ENCODE measurements at regions of chr12 and their contacts with region 1.

Region 1: DNA sequence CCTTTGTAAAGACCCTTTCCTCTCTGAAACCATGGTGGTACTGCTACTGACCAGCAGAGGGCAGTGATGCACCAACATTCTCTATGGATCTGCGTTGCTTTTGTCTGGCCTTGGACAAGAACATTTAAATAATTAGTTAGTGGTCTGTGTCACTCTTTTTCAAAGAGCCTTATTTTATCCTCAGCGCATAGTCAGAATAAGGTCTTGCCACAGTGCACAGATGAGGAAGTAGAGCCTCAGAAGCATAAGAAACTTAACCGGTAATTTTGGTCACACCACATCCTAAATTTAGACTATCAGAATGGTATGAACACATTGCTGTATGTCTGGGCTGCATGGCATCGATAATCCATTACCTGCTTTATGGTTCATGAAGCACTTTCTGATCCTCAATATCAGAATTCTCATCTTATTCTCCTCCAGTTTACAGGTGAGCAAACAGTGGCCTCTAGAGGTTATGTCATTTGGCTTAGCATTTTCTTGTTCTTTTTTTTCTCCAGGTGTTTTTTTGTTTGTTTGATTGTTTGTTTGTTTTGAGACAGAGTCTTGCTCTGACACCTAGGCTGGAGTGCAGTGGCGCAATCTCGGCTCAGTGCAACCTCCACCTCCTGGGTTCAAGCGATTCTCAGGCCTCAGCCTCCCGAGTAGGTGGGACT is 23.7 kb upstream of the IFT81 start:
- DNase-seq: peak in 8 of 9 donors; percentile 33 to 60 (median 55)
- ATAC-seq: peak; percentile 92
- H3K4me3 ChIP-seq: no peak overlapping the region
- H3K4me3 Mint-ChIP-seq: peak overlapping the region in 2 of 10 donors; percentile 12 to 44
- H3K27ac ChIP-seq: no peak overlapping the region
- H3K27ac Mint-ChIP-seq: peak overlapping the region in 4 of 9 donors; percentile 3 to 69 (median 42)
- H3K4me1 ChIP-seq: peaks cover 3 to 4% of the 10 kb centered on the region in 2 donors
- H3K4me1 Mint-ChIP-seq: peaks cover 0 to 13% (median 8%) of the 10 kb centered on the region in 7 donors
- H3K27me3 ChIP-seq: no peaks in the 10 kb centered on the region
- H3K27me3 Mint-ChIP-seq: no peaks in the 10 kb centered on the region

Region 2: DNA sequence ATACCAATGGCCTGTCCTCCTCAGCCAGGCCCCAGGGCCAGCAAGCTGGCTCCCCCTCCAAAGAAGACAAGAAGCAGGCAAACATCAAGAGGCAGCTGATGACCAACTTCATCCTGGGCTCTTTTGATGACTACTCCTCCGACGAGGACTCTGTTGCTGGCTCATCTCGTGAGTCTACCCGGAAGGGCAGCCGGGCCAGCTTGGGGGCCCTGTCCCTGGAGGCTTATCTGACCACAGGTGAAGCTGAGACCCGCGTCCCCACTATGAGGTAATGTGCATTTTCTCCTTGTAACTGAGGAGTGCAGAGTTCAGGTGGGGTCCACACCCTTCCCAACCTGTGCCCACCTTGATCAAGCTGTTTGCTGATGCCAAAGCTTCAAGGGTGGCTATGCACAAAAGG is 960.7 kb before region 1 on chr12:
- CTCF ChIA-PET with region 1: no interaction called
- POLR2A ChIA-PET with region 1: no interaction called
- intact Hi-C with region 1: no loop called
- DNase-seq: no peak
- ATAC-seq: no peak
- H3K4me3 ChIP-seq: no peak overlapping the region
- H3K4me3 Mint-ChIP-seq: no peak overlapping the region
- H3K27ac ChIP-seq: no peak overlapping the region
- H3K27ac Mint-ChIP-seq: no peak overlapping the region
- H3K4me1 ChIP-seq: no peaks in the 10 kb centered on the region
- H3K4me1 Mint-ChIP-seq: peaks cover 0 to 7% (median 4%) of the 10 kb centered on the region in 7 donors
- H3K27me3 ChIP-seq: no peaks in the 10 kb centered on the region
- H3K27me3 Mint-ChIP-seq: peaks cover 0 to 7% (median 4%) of the 10 kb centered on the region in 5 donors

Region 3: DNA sequence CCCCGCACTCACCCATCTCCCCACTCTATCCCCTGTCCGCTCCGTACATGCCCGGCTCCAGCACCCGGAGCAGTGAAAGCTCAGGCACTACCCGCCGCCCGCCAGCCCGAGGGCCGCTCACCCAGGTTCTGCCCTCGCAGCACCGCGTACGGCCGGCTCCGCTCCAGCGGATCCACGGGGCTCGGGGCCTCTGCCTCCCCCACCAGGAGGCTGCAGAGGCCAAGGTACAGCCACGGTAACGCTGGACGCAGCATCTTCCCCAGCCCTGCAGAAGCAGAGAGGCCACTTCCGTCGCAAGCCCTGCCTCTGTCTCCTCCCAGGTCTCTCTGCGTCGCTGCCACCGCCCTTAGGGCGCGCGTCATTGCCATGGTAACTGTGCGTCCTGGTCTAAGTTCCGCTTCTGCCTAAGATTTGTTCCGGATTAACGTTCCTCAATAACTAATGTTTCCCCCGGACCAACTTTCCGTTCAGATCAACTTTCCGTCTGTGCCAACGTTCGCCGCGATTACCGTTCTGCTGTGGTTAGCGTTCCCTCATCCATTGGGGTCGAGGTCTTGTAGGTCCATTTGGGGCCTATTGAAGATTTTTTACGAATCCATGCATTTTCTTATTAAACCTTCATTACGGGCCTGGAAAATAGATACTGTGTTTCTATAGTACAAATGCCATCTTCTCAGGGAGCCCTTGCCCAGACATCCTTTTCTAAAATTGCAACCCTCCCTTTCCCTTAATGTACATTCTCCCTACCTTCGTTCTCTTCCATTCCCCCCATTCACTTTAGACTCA is 52.0 kb before region 1 on chr12 and contains the start of gene C12orf76:
- CTCF ChIA-PET with region 1: no interaction called
- POLR2A ChIA-PET with region 1: no interaction called
- intact Hi-C with region 1: loop called in 1 of 2 experiments (anchors 1 kb)
- DNase-seq: peak; percentile 67 to 92 (median 90)
- ATAC-seq: peak; percentile 100
- H3K4me3 ChIP-seq: peak within 1 kb of the TSS; percentile 81
- H3K4me3 Mint-ChIP-seq: peak within 1 kb of the TSS; percentile 84 to 97 (median 93)
- H3K27ac ChIP-seq: peak within 1 kb of the TSS; percentile 77
- H3K27ac Mint-ChIP-seq: peak within 1 kb of the TSS; percentile 90 to 99 (median 96)
- H3K4me1 ChIP-seq: peaks cover 19% of the 10 kb centered on the region in 2 donors
- H3K4me1 Mint-ChIP-seq: peaks cover 16 to 46% (median 34%) of the 10 kb centered on the region in 7 donors
- H3K27me3 ChIP-seq: no peaks in the 10 kb centered on the region
- H3K27me3 Mint-ChIP-seq: no peaks in the 10 kb centered on the region
- total RNA-seq, gene C12orf76: 14.6 to 28.7 (median 27.8) TPM

Region 4: GRCh38 chr12:110117956-110118685 is 17.7 kb after region 1 on chr12:
- CTCF ChIA-PET with region 1: no interaction called
- POLR2A ChIA-PET with region 1: no interaction called
- intact Hi-C with region 1: no loop called
- DNase-seq: no peak
- ATAC-seq: no peak
- H3K4me3 ChIP-seq: no peak overlapping the region
- H3K4me3 Mint-ChIP-seq: no peak overlapping the region
- H3K27ac ChIP-seq: no peak overlapping the region
- H3K27ac Mint-ChIP-seq: no peak overlapping the region
- H3K4me1 ChIP-seq: no peaks in the 10 kb centered on the region
- H3K4me1 Mint-ChIP-seq: peaks cover 0 to 3% (median 0%) of the 10 kb centered on the region in 7 donors
- H3K27me3 ChIP-seq: no peaks in the 10 kb centered on the region
- H3K27me3 Mint-ChIP-seq: peaks cover 0 to 45% (median 0%) of the 10 kb centered on the region in 5 donors

Region 5: DNA sequence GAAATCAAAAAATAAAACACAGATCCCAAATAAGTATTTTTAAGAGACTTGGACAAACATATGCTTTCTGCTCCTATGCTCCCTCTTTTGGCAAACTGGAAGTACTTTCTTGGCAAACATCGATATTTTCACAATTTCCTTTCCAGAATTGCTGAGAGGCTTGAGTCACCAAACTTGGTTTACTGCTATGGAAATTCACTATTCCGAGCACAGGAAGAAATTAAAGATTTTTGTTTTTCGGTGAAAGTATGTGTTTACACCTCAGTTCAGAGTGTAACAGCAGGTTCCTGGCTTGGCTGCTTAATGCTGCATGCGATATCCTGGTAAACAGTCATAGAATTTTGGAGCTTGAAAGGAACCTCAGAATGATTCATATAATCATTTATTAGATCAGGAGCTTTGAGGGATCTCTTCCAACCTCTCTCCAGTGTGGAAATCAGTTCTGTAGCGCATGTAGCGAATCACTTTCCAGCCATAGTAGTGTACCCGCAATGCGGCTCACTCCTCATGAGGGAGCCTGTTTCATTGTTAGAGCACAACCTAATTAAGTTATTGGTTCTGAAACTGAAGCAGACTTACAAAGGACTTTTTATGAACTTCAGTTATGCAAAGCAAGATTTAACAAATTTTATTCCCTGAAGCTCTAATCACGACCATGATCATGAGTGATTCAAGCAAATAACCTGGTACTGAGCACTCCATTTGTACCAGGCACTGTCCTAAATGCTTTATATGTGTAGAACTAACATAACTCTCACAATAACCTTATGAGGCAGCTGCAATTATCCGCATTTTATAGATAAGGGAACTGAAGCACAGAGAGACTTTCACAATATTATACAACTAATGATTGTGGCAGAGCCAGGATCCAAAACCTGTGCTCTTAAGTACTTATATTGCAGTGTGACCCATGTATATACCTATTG is 124.2 kb after region 1 on chr12:
- CTCF ChIA-PET with region 1: interaction called, 8 read pairs
- POLR2A ChIA-PET with region 1: no interaction called
- intact Hi-C with region 1: loop called (anchors 1 kb)
- DNase-seq: no peak
- ATAC-seq: no peak
- H3K4me3 ChIP-seq: no peak overlapping the region
- H3K4me3 Mint-ChIP-seq: no peak overlapping the region
- H3K27ac ChIP-seq: no peak overlapping the region
- H3K27ac Mint-ChIP-seq: no peak overlapping the region
- H3K4me1 ChIP-seq: no peaks in the 10 kb centered on the region
- H3K4me1 Mint-ChIP-seq: peaks cover 0 to 5% (median 0%) of the 10 kb centered on the region in 7 donors
- H3K27me3 ChIP-seq: no peaks in the 10 kb centered on the region
- H3K27me3 Mint-ChIP-seq: peaks cover 0 to 26% (median 0%) of the 10 kb centered on the region in 5 donors

Region 6: DNA sequence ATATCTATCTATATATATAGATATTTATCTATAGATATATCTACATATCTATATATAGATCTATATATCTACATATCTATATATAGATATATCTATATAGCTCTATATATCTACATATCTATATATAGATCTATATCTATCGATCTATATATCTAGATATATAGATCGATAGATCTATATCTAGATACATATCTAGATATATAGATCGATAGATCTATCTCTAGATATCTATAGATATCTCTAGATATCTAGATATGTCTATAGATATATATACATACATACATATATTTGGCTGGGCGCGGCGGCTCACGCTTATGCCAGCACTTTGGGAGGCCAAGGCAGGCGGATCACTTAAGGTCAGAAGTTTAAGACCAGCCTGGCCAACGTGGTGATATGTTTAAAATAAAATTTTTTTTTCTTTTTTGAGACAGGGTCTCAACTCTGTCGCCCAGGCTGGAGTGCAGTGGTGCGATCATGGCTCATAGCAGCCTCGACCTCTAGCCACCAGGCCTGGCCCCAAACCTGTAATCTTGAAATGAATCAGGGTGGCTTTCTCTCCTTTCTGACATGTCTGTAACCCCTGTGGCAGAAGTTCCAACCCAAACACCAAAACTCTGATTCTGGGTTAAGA is 331.6 kb after region 1 on chr12:
- CTCF ChIA-PET with region 1: interaction called, 24 read pairs
- POLR2A ChIA-PET with region 1: interaction called, 4 read pairs
- intact Hi-C with region 1: loop called (anchors 1 kb)
- DNase-seq: no peak
- ATAC-seq: no peak
- H3K4me3 ChIP-seq: no peak overlapping the region
- H3K4me3 Mint-ChIP-seq: peak overlapping the region in 4 of 10 donors; percentile 91 to 100 (median 96)
- H3K27ac ChIP-seq: no peak overlapping the region
- H3K27ac Mint-ChIP-seq: peak overlapping the region in 3 of 9 donors; percentile 96 to 99 (median 98)
- H3K4me1 ChIP-seq: no peaks in the 10 kb centered on the region
- H3K4me1 Mint-ChIP-seq: peaks cover 0 to 5% (median 0%) of the 10 kb centered on the region in 7 donors
- H3K27me3 ChIP-seq: no peaks in the 10 kb centered on the region
- H3K27me3 Mint-ChIP-seq: peaks cover 0 to 3% (median 0%) of the 10 kb centered on the region in 5 donors

Region 7: DNA sequence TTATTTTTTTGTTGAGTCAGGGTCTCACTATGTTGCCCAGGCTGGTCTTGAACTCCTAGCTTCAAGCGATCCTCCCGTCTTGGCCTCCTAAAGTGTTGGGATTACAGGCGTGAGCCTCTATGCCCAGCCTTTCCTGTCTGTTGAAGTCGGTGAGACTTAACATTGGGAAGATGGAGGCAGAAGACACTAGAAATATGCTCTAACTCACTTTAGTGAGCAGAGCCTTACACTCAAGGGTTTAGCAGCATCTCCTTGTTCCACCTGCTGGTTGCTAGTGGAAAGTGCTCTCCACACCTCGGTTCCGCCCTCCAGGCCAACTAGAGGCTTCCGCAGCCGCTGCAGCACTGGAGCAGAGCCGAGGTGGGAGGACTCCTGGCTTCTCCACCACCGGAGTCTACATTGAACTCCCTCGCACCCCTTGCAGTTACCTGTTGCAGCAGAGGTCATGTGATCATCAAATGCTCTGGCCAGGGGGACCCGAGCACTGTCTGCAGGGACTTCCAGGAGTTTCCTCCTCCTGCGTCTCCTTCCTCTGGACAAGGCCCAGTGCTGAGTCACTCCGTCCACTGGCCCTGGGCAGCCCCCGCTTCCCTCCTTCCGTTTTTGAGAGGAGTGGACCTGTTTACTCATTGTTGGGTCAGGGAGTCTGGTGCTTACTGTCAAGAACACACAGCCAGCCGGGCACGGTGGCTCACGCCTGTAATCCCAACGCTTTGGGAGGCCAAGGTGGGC is 597.9 kb after region 1 on chr12:
- CTCF ChIA-PET with region 1: no interaction called
- POLR2A ChIA-PET with region 1: no interaction called
- intact Hi-C with region 1: loop called in 1 of 2 experiments (anchors 1 kb)
- DNase-seq: peak; percentile 51 to 87 (median 77)
- ATAC-seq: peak; percentile 96
- H3K4me3 ChIP-seq: no peak overlapping the region
- H3K4me3 Mint-ChIP-seq: peak overlapping the region in 4 of 10 donors; percentile 14 to 69 (median 34)
- H3K27ac ChIP-seq: no peak overlapping the region
- H3K27ac Mint-ChIP-seq: peak overlapping the region in 6 of 9 donors; percentile 49 to 88 (median 74)
- H3K4me1 ChIP-seq: peaks cover 7 to 10% of the 10 kb centered on the region in 2 donors
- H3K4me1 Mint-ChIP-seq: peaks cover 5 to 25% (median 18%) of the 10 kb centered on the region in 7 donors
- H3K27me3 ChIP-seq: no peaks in the 10 kb centered on the region
- H3K27me3 Mint-ChIP-seq: no peaks in the 10 kb centered on the region

Region 8: GRCh38 chr12:111261911-111262676 is 1161.7 kb after region 1 on chr12:
- CTCF ChIA-PET with region 1: no interaction called
- POLR2A ChIA-PET with region 1: no interaction called
- intact Hi-C with region 1: no loop called
- DNase-seq: no peak
- ATAC-seq: no peak
- H3K4me3 ChIP-seq: no peak overlapping the region
- H3K4me3 Mint-ChIP-seq: no peak overlapping the region
- H3K27ac ChIP-seq: no peak overlapping the region
- H3K27ac Mint-ChIP-seq: no peak overlapping the region
- H3K4me1 ChIP-seq: no peaks in the 10 kb centered on the region
- H3K4me1 Mint-ChIP-seq: peaks cover 0 to 3% (median 0%) of the 10 kb centered on the region in 7 donors
- H3K27me3 ChIP-seq: no peaks in the 10 kb centered on the region
- H3K27me3 Mint-ChIP-seq: peaks cover 0 to 7% (median 0%) of the 10 kb centered on the region in 5 donors

Measured in naive thymus-derived CD4-positive, alpha-beta T cell (primary cell).